ENCODE measurements at regions of chr11 and their contacts with region 1.

Region 1: GRCh38 chr11:111001986-111002611 is 243.4 kb upstream of the POU2AF2 start:
- DNase-seq: no peak
- ATAC-seq: peak; percentile 26 to 92 (median 70)
- H3K4me3 ChIP-seq: no peak overlapping the region
- H3K27ac ChIP-seq: no peak overlapping the region
- H3K4me1 ChIP-seq: peaks cover 0 to 11% (median 0%) of the 10 kb centered on the region in 12 donors
- H3K27me3 ChIP-seq: peaks cover 0 to 2% (median 0%) of the 10 kb centered on the region in 9 donors
- CTCF ChIP-seq: no peak
- POLR2A ChIP-seq: no peak

Region 2: GRCh38 chr11:110866091-110866490 is 136.0 kb before region 1 on chr11:
- intact Hi-C with region 1: no loop called
- DNase-seq: no peak
- ATAC-seq: no peak
- H3K4me3 ChIP-seq: no peak overlapping the region
- H3K27ac ChIP-seq: no peak overlapping the region
- H3K4me1 ChIP-seq: no peaks in the 10 kb centered on the region
- H3K27me3 ChIP-seq: no peaks in the 10 kb centered on the region
- CTCF ChIP-seq: no peak
- POLR2A ChIP-seq: no peak

Region 3: DNA sequence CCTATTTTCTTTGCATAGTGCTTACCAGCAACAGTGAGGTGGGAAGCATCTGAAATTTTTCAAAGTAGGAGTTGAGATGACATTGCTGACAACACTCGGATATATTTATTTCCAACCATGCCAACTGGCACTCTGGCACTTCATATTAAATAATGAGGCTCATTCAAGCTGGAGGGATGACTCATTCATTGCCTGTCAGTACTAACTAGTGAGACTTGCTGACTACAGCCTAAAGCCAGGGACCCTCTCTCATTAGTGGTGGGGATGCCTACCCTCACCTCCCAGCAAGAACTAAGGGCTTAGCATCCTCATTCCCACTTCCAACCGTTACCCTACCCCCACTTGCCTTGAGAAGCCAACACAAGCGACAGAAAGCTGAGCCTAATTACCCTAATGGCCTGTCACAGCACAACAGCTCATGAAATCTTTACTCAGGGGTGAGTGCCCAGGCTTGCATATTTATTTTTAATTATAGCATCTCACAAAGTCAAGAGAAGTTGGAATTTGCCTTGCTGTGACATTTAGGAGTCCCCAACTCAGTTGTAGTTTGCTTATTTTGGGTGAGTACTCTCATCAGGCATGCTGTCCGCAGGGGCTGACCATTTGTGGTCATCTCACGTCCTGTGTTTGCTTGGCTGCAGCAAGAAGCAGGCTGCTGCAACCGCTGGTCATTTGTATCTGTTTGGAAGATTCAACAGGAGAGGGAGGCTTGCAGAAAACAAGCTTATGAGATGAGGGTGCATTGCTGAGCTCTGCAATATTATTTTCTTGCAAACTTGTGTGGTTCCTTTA is 61.8 kb after region 1 on chr11:
- intact Hi-C with region 1: loop called in 1 of 10 experiments (anchors 10 kb)
- DNase-seq: no peak
- ATAC-seq: no peak
- H3K4me3 ChIP-seq: no peak overlapping the region
- H3K27ac ChIP-seq: no peak overlapping the region
- H3K4me1 ChIP-seq: no peaks in the 10 kb centered on the region
- H3K27me3 ChIP-seq: no peaks in the 10 kb centered on the region
- CTCF ChIP-seq: no peak
- POLR2A ChIP-seq: no peak

Measured in heart left ventricle (tissue), 16 donors.